Common myeloid progenitor, CD34-positive (primary cell): ENCODE measurements at regions of chr7 and their contacts with region 1.

Region 1: GRCh38 chr7:104956753-104957450 is 57.1 kb upstream of the KMT2E start:
- DNase-seq: peak; percentile 73 to 94 (median 91)
- H3K4me3 ChIP-seq: peak overlapping the region in 2 of 7 experiments; percentile 26 to 31
- H3K27ac ChIP-seq: peak overlapping the region; percentile 80 to 94
- H3K4me1 ChIP-seq: peaks cover 20 to 53% (median 45%) of the 10 kb centered on the region in 4 experiments
- H3K27me3 ChIP-seq: no peaks in the 10 kb centered on the region

Region 2: GRCh38 chr7:104538152-104538551 is 418.8 kb before region 1 on chr7:
- CTCF ChIA-PET with region 1: no interaction called
- POLR2A ChIA-PET with region 1: no interaction called
- DNase-seq: no peak
- H3K4me3 ChIP-seq: no peak overlapping the region
- H3K27ac ChIP-seq: no peak overlapping the region
- H3K4me1 ChIP-seq: no peaks in the 10 kb centered on the region
- H3K27me3 ChIP-seq: no peaks in the 10 kb centered on the region

Region 3: DNA sequence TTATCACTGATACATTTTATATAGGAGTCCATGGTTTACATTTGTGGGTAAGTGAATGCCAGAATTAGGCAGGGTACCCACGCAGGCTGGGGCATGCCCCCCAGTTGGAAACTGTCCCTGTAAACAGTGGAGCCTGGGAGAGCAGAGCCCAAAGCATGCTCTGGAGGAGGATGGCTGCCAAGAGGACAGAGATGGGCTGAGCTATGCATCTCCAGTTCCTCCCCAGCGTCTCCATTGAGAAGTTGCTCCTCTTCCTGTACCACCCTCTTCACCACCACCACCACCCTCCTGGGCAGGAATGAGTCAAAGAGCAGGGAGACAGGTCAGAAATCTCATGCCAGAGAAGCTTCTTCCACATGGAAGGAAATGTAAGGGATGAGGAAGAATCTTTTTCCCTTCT is 10.6 kb before region 1 on chr7:
- CTCF ChIA-PET with region 1: interaction called, 11 read pairs
- POLR2A ChIA-PET with region 1: interaction called, 6 read pairs
- DNase-seq: no peak
- H3K4me3 ChIP-seq: no peak overlapping the region
- H3K27ac ChIP-seq: peak overlapping the region in 1 of 2 experiments; percentile 97
- H3K4me1 ChIP-seq: peaks cover 39 to 56% (median 49%) of the 10 kb centered on the region in 4 experiments
- H3K27me3 ChIP-seq: no peaks in the 10 kb centered on the region

Region 4: DNA sequence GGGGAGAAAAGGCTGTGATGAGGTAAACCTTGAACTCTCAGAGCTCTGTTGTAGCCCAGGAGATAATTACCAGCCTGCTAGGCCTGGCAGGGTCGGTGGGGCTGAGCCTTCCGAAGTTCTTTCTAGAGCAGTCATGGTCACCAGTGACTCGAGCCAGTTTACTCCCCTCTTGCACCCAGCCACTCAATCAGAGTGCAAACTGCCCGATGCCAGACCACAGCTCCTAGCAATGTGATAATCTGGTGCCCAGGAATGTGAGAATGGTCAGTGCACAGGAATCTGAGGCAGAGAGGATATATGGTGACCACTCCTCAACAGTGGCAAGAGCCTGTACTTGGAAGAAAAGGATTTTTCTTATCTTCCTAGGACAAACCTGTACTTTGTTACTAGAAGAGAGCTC is 10.7 kb after region 1 on chr7:
- CTCF ChIA-PET with region 1: interaction called, 11 read pairs
- POLR2A ChIA-PET with region 1: no interaction called
- DNase-seq: no peak
- H3K4me3 ChIP-seq: no peak overlapping the region
- H3K27ac ChIP-seq: no peak overlapping the region
- H3K4me1 ChIP-seq: peaks cover 5 to 13% (median 9%) of the 10 kb centered on the region in 4 experiments
- H3K27me3 ChIP-seq: no peaks in the 10 kb centered on the region

Region 5: DNA sequence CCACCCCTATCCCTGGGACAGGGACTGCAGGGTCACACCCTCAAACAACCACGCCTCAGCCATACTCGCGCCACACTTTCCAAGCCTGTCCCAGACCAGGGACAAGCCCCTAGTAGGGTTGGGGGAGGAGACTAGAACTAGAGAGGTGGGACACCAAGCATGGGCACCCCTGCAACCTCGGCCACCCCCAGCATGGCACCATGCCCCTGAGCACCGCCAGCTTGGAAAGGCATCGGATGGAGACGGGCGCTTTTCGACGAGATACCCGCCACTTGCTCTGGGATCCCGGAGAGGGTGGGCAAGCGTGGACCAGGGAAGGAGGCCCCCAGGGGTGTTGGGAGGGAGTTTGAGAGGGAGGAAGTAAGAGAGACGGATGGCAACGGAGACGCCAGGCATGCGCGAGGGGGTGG is 44.0 kb after region 1 on chr7:
- CTCF ChIA-PET with region 1: no interaction called
- POLR2A ChIA-PET with region 1: no interaction called
- DNase-seq: no peak
- H3K4me3 ChIP-seq: no peak overlapping the region
- H3K27ac ChIP-seq: peak overlapping the region in 1 of 2 experiments; percentile 5
- H3K4me1 ChIP-seq: peaks cover 0 to 14% (median 5%) of the 10 kb centered on the region in 4 experiments
- H3K27me3 ChIP-seq: no peaks in the 10 kb centered on the region